ENCODE measurements at regions of chr19 and their contacts with region 1.

Region 1: GRCh38 chr19:41746593-41747227 is 8.6 kb upstream of the CEACAM6 start:
- DNase-seq: peak; percentile 22 to 55 (median 53)
- H3K4me3 ChIP-seq: no peak overlapping the region
- H3K4me3 Mint-ChIP-seq: no peak overlapping the region
- H3K27ac ChIP-seq: no peak overlapping the region
- H3K27ac Mint-ChIP-seq: peak overlapping the region in 1 of 7 donors; percentile 33
- H3K4me1 ChIP-seq: peaks cover 39 to 40% of the 10 kb centered on the region in 2 donors
- H3K4me1 Mint-ChIP-seq: peaks cover 49% of the 10 kb centered on the region
- H3K27me3 ChIP-seq: peaks cover 2 to 4% of the 10 kb centered on the region in 2 donors
- H3K27me3 Mint-ChIP-seq: peaks cover 6 to 13% (median 13%) of the 10 kb centered on the region in 3 donors
- CTCF ChIP-seq: peak; percentile 62

Region 2: DNA sequence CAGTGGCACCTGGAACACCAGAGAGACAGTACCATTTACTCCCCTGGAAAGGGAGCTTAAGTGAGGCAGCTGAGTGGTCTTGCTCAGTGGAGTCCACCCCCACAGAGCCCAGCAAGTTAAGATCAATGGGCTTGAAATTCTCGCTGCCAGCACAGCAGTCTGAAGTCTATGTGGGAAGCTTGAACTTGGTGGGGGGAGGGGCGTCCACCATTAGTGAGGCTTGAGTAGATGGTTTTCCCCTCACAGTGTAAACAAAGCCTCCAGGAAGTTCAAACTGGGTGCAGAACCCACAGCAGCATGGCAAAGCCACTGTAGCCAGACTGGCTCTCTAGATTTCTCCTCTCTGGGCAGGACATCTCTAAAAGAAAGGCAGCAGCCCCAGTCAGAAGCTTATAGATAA is 89.6 kb before region 1 on chr19:
- intact Hi-C with region 1: no loop called
- DNase-seq: no peak
- H3K4me3 ChIP-seq: no peak overlapping the region
- H3K4me3 Mint-ChIP-seq: no peak overlapping the region
- H3K27ac ChIP-seq: no peak overlapping the region
- H3K27ac Mint-ChIP-seq: no peak overlapping the region
- H3K4me1 ChIP-seq: no peaks in the 10 kb centered on the region
- H3K4me1 Mint-ChIP-seq: no peaks in the 10 kb centered on the region
- H3K27me3 ChIP-seq: peaks cover 31 to 43% of the 10 kb centered on the region in 2 donors
- H3K27me3 Mint-ChIP-seq: peaks cover 36 to 88% (median 59%) of the 10 kb centered on the region in 3 donors
- CTCF ChIP-seq: no peak

Region 3: DNA sequence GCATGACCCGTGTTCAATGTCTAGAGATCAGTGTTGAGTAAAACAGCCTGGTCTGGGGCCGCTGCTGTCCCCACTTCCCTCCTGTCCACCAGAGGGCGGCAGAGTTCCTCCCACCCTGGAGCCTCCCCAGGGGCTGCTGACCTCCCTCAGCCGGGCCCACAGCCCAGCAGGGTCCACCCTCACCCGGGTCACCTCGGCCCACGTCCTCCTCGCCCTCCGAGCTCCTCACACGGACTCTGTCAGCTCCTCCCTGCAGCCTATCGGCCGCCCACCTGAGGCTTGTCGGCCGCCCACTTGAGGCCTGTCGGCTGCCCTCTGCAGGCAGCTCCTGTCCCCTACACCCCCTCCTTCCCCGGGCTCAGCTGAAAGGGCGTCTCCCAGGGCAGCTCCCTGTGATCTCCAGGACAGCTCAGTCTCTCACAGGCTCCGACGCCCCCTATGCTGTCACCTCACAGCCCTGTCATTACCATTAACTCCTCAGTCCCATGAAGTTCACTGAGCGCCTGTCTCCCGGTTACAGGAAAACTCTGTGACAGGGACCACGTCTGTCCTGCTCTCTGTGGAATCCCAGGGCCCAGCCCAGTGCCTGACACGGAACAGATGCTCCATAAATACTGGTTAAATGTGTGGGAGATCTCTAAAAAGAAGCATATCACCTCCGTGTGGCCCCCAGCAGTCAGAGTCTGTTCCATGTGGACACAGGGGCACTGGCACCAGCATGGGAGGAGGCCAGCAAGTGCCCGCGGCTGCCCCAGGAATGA is 39.8 kb before region 1 on chr19:
- intact Hi-C with region 1: loop called in 1 of 2 experiments (anchors 5 kb)
- DNase-seq: peak; percentile 50 to 62 (median 56)
- H3K4me3 ChIP-seq: peak overlapping the region in 2 of 3 experiments; percentile 26 to 65
- H3K4me3 Mint-ChIP-seq: peak overlapping the region; percentile 79 to 89
- H3K27ac ChIP-seq: no peak overlapping the region
- H3K27ac Mint-ChIP-seq: peak overlapping the region in 2 of 7 donors; percentile 45 to 77
- H3K4me1 ChIP-seq: peaks cover 0 to 3% of the 10 kb centered on the region in 2 donors
- H3K4me1 Mint-ChIP-seq: peaks cover 5% of the 10 kb centered on the region
- H3K27me3 ChIP-seq: peaks cover 0 to 6% of the 10 kb centered on the region in 2 donors
- H3K27me3 Mint-ChIP-seq: peaks cover 8 to 28% (median 22%) of the 10 kb centered on the region in 3 donors
- CTCF ChIP-seq: peak; percentile 100

Measured in CD14-positive monocyte (primary cell).